ENCODE measurements at regions of chr19 and their contacts with region 1.

Region 1: GRCh38 chr19:42794765-42795164 is 29.3 kb upstream of the PSG8 start:
- DNase-seq: no peak
- H3K4me3 ChIP-seq: no peak overlapping the region
- CTCF ChIP-seq: no peak

Region 2: DNA sequence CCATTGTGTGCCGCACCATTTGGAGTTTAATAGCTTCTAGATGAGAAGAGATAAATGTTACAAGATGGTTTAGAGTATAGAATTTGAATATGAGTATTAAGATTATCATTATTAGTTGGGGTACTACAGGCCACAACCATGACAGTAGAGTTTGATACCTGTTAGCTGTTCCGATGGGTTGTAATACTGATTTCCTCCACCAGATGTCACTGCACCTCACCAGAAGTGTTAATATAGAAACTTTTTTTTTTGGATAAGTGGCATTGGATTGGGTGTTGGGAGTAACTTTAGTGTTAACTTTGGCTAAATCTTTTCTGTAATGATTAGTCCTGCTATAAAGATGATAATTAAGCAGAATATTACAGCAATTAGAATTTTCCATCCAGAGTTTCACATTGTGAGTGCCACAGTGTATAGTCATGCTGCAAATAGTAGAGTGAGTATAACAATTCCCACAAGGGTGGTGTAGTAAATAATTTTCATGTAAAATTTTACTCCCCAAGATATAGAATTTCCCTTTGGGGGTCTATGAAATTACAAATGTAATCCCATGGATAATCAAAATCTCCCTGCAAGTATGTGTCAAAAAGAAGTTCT is 110.8 kb before region 1 on chr19:
- CTCF ChIA-PET with region 1: interaction called, 33 read pairs
- POLR2A ChIA-PET with region 1: no interaction called
- DNase-seq: no peak
- H3K4me3 ChIP-seq: no peak overlapping the region
- CTCF ChIP-seq: peak; percentile 46

Region 3: GRCh38 chr19:42693764-42694350 is 100.9 kb before region 1 on chr19:
- CTCF ChIA-PET with region 1: interaction called, 20 read pairs
- POLR2A ChIA-PET with region 1: no interaction called
- DNase-seq: no peak
- H3K4me3 ChIP-seq: no peak overlapping the region
- CTCF ChIP-seq: peak; percentile 77

Region 4: GRCh38 chr19:42881229-42881628 is 86.5 kb after region 1 on chr19:
- CTCF ChIA-PET with region 1: interaction called, 63 read pairs
- POLR2A ChIA-PET with region 1: no interaction called
- DNase-seq: no peak
- H3K4me3 ChIP-seq: no peak overlapping the region
- CTCF ChIP-seq: peak; percentile 33

Region 5: GRCh38 chr19:42919511-42920021 is 124.8 kb after region 1 on chr19:
- CTCF ChIA-PET with region 1: interaction called, 34 read pairs
- POLR2A ChIA-PET with region 1: no interaction called
- DNase-seq: no peak
- H3K4me3 ChIP-seq: no peak overlapping the region
- CTCF ChIP-seq: peak; percentile 15